ENCODE measurements at regions of chr2 and their contacts with region 1.

Region 1: GRCh38 chr2:58046585-58047372 is at the start of gene VRK2:
- DNase-seq: peak; percentile 97
- H3K4me3 Mint-ChIP-seq: peak within 1 kb of the TSS; percentile 86
- H3K27ac Mint-ChIP-seq: peak within 1 kb of the TSS; percentile 90
- H3K4me1 Mint-ChIP-seq: peaks cover 17% of the 10 kb centered on the region
- H3K27me3 Mint-ChIP-seq: no peaks in the 10 kb centered on the region
- CTCF ChIP-seq: no peak
- total RNA-seq, gene VRK2: 44.6 and 52.7 TPM in 2 replicates

Region 2: DNA sequence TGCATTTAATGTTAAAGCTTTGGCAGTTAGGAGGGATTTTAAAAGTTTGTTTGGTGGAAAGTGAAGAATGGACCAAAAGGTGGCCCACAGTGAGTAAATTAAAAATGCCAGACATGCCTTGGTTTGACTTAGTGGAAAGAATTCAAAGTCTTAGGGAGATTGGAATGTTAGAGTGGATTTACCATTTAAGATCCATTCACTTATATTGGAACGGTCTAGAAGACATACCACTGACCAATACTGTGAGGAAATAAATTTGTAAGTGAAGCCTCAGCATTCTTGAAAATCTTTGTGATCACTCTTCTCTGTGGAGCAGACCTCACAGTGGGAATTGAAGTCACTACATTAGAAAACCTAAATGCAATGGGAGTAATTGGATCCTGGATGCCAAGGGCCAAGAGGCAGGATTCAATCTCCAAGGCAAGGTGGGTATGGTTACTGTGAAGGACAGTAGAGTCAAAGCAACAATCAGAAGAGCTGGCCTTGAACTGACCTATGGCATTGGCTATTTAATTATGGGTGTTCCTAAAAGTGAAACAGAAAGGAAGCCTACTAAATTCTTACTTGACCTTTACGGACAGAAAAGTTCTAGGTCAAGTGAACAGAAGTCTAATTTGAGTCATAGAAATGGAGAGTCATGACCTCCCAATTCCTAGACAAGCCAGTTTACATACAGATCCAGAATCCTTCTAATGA is 40.4 kb before region 1 on chr2:
- CTCF ChIA-PET with region 1: no interaction called
- POLR2A ChIA-PET with region 1: no interaction called
- intact Hi-C with region 1: no loop called
- DNase-seq: no peak
- H3K4me3 Mint-ChIP-seq: no peak overlapping the region
- H3K27ac Mint-ChIP-seq: no peak overlapping the region
- H3K4me1 Mint-ChIP-seq: no peaks in the 10 kb centered on the region
- H3K27me3 Mint-ChIP-seq: no peaks in the 10 kb centered on the region
- CTCF ChIP-seq: no peak

Region 3: DNA sequence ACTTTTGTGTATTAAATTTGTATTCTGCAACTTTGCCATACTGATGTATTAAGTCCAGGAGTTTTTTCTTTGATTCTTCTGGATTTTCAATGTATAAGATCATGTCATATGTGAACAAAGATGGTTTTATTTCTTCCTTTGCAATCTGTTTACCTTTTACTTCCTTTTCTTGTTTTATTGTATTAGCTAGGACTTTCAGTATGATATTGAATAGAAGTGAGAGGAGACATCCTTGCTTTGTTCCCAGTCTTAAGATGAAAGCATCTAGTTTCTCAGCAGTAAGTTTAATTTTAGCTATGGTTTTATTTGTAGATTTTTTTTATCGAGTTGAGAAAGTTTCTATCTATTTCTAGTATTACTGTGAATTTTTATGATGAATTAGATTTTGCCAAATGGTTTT is 25.3 kb after region 1 on chr2:
- CTCF ChIA-PET with region 1: no interaction called
- POLR2A ChIA-PET with region 1: no interaction called
- intact Hi-C with region 1: no loop called
- DNase-seq: no peak
- H3K4me3 Mint-ChIP-seq: no peak overlapping the region
- H3K27ac Mint-ChIP-seq: no peak overlapping the region
- H3K4me1 Mint-ChIP-seq: no peaks in the 10 kb centered on the region
- H3K27me3 Mint-ChIP-seq: no peaks in the 10 kb centered on the region
- CTCF ChIP-seq: no peak

Region 4: GRCh38 chr2:58098254-58099095 is 51.7 kb after region 1 on chr2:
- CTCF ChIA-PET with region 1: interaction called, 6 read pairs
- POLR2A ChIA-PET with region 1: interaction called, 29 read pairs
- intact Hi-C with region 1: no loop called
- DNase-seq: peak; percentile 67
- H3K4me3 Mint-ChIP-seq: no peak overlapping the region
- H3K27ac Mint-ChIP-seq: peak overlapping the region; percentile 59
- H3K4me1 Mint-ChIP-seq: peaks cover 17% of the 10 kb centered on the region
- H3K27me3 Mint-ChIP-seq: no peaks in the 10 kb centered on the region
- CTCF ChIP-seq: no peak

Region 5: GRCh38 chr2:58107803-58108710 is 61.3 kb after region 1 on chr2:
- CTCF ChIA-PET with region 1: no interaction called
- POLR2A ChIA-PET with region 1: interaction called, 22 read pairs
- intact Hi-C with region 1: loop called (anchors 2 kb)
- DNase-seq: peak; percentile 97
- H3K4me3 Mint-ChIP-seq: peak overlapping the region; percentile 58
- H3K27ac Mint-ChIP-seq: peak overlapping the region; percentile 89
- H3K4me1 Mint-ChIP-seq: peaks cover 46% of the 10 kb centered on the region
- H3K27me3 Mint-ChIP-seq: no peaks in the 10 kb centered on the region
- CTCF ChIP-seq: no peak